ENCODE measurements at regions of chr7 and their contacts with region 1.

Region 1: DNA sequence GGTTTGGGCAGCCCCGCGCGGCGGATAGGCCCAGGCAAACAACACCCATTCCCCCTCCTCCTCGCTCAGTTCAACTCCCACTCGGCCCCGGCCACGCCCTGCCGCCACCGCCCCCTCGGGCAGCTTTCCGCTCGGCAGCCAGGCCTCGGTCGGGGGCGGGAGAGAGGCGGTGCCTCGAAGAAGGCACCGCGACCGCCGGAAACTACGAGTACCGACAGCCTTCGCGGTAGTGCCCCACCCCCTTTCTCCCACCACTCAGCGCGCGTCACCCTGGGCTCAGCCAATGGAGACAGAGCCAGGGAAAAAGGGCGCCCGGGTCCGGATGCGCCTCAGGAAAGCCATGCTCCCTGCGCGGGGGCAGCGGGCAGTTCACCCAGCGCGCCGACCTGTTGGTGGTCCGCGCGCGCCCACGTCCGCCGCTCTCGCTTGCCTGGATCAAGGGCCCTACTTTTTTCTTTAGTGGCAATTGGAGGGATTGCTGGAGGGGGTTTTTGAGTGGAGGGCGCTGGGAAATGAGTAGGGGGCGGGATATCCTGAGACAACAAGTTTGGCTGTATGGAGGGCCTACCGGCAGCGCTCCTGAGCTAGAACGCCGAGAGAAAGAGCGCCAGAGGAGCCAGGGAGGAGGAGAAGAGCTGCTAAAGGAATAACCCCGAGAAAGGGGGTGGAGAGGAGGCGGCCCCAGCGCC is 557 bp upstream of the SP4 start:
- DNase-seq: peak; percentile 99
- ATAC-seq: peak; percentile 75
- H3K4me3 Mint-ChIP-seq: peak overlapping the region; percentile 100
- H3K27ac Mint-ChIP-seq: peak overlapping the region; percentile 100
- H3K4me1 Mint-ChIP-seq: peaks cover 49% of the 10 kb centered on the region
- H3K27me3 Mint-ChIP-seq: no peaks in the 10 kb centered on the region
- CTCF ChIP-seq: no peak

Region 2: DNA sequence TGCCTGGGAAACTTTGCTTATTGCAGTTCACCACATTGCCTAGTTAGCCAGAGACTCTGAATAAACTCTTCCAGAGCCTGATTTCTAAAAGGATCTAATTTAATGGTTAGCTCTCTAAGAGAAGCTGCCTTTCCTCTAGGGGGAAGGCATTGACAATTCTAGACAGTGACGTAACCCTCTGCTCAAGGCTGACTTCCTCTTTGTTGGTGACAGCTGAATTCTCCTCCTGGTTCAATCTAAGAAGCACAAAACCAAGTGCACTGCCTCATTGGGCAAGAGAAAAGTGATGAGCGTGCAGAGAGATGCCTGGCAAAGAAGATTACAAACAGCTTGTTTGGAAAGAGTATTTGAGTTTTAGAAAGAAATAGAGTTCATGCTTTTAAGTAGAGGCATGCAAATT is 1312.9 kb before region 1 on chr7:
- CTCF ChIA-PET with region 1: no interaction called
- POLR2A ChIA-PET with region 1: no interaction called
- intact Hi-C with region 1: loop called (anchors 5 kb)
- DNase-seq: no peak
- ATAC-seq: peak; percentile 90
- H3K4me3 Mint-ChIP-seq: peak overlapping the region; percentile 39
- H3K27ac Mint-ChIP-seq: peak overlapping the region; percentile 54
- H3K4me1 Mint-ChIP-seq: peaks cover 25% of the 10 kb centered on the region
- H3K27me3 Mint-ChIP-seq: no peaks in the 10 kb centered on the region
- CTCF ChIP-seq: no peak

Region 3: DNA sequence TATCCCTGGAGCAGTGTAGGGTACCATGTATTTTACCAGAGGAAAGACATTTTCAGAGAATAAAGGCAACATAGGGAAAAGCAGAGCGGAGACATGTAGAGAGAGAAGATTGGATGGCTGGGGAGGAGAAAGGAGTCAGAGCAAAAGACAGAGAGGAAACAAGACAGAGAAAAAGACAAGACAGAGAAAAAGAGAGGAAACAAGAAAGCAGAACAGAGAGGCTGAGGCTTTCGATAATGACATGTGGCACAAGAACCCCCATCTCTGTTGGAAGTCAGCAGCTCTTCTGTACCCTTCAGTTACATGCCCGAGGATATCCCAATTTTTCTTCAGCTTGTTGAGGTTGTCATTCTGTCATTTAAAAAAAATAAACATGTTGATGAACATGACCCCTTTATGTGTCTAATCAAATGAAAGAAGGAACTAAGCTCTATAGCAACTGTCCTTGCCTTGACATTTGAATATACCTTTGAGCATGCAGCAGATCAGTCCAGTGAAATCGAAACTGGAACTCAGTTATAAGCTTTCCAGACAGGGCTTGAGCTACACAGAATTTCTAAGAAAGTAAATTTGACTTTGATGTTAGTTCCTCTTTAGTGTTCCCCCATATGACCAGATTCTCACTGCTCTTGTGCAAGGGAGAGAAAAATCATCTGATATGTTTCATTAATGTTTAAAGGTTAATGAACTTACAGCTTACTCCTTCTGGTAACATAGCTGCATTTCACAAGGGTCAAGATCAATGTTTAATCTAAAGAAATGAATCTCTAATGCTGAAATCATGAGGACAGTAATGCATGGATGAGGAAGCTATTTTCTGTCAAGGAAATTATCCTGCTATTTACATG is 74.6 kb before region 1 on chr7:
- CTCF ChIA-PET with region 1: interaction called, 10 read pairs
- POLR2A ChIA-PET with region 1: interaction called, 42 read pairs
- intact Hi-C with region 1: loop called (anchors 1 kb)
- DNase-seq: no peak
- ATAC-seq: peak; percentile 84
- H3K4me3 Mint-ChIP-seq: peak overlapping the region; percentile 71
- H3K27ac Mint-ChIP-seq: peak overlapping the region; percentile 88
- H3K4me1 Mint-ChIP-seq: peaks cover 58% of the 10 kb centered on the region
- H3K27me3 Mint-ChIP-seq: no peaks in the 10 kb centered on the region
- CTCF ChIP-seq: no peak

Region 4: GRCh38 chr7:21939136-21939857 is 512.0 kb after region 1 on chr7:
- CTCF ChIA-PET with region 1: no interaction called
- POLR2A ChIA-PET with region 1: interaction called, 18 read pairs
- intact Hi-C with region 1: loop called (anchors 1 kb)
- DNase-seq: no peak
- ATAC-seq: peak; percentile 55
- H3K4me3 Mint-ChIP-seq: peak overlapping the region; percentile 64
- H3K27ac Mint-ChIP-seq: peak overlapping the region; percentile 75
- H3K4me1 Mint-ChIP-seq: peaks cover 93% of the 10 kb centered on the region
- H3K27me3 Mint-ChIP-seq: no peaks in the 10 kb centered on the region
- CTCF ChIP-seq: no peak

Region 5: GRCh38 chr7:22082886-22083703 is 655.8 kb after region 1 on chr7:
- CTCF ChIA-PET with region 1: interaction called, 6 read pairs
- POLR2A ChIA-PET with region 1: no interaction called
- intact Hi-C with region 1: loop called (anchors 2 kb)
- DNase-seq: peak; percentile 91
- ATAC-seq: peak; percentile 97
- H3K4me3 Mint-ChIP-seq: peak overlapping the region; percentile 89
- H3K27ac Mint-ChIP-seq: peak overlapping the region; percentile 70
- H3K4me1 Mint-ChIP-seq: peaks cover 13% of the 10 kb centered on the region
- H3K27me3 Mint-ChIP-seq: peaks cover 25% of the 10 kb centered on the region
- CTCF ChIP-seq: peak; percentile 83

Region 6: DNA sequence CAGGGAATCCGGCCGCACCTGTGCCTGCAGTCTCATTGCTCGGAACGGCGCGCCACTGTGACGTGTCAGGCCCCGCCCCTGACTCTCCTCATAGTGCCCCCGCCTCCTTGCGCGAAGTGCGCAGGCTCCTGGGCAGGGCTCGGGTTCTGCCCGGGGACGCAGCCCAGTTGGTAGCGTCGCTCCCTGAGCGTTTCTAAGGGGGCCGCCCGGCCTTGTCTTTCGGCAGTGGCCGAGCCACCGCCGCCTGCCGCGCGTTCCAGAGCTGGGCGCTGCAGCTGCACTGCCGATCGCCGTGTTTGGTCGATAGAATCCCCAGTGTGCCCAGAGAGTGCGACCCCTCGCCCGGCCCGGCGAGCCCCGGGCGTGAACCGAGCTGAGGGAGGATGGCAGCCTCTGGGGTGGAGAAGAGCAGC is 1678.3 kb after region 1 on chr7 and contains the start of gene KLHL7:
- CTCF ChIA-PET with region 1: no interaction called
- POLR2A ChIA-PET with region 1: no interaction called
- intact Hi-C with region 1: loop called (anchors 1 kb)
- DNase-seq: peak; percentile 98
- ATAC-seq: peak; percentile 95
- H3K4me3 Mint-ChIP-seq: peak within 1 kb of the TSS; percentile 94
- H3K27ac Mint-ChIP-seq: peak within 1 kb of the TSS; percentile 97
- H3K4me1 Mint-ChIP-seq: peaks cover 32% of the 10 kb centered on the region
- H3K27me3 Mint-ChIP-seq: no peaks in the 10 kb centered on the region
- CTCF ChIP-seq: no peak
- total RNA-seq, gene KLHL7: 12.2 and 13.4 TPM in 2 replicates

Measured in activated B cell treated with CpG ODN at 0.5 μM for 24 hours (primary cell).